ENCODE measurements at regions of chr21 and their contacts with region 1.

Region 1: GRCh38 chr21:42424914-42425541 is 21.3 kb downstream of the UBASH3A start:
- DNase-seq: peak; percentile 75
- H3K4me3 Mint-ChIP-seq: peak overlapping the region; percentile 44
- H3K27ac Mint-ChIP-seq: peak overlapping the region; percentile 61
- H3K4me1 Mint-ChIP-seq: peaks cover 67% of the 10 kb centered on the region
- H3K27me3 Mint-ChIP-seq: no peaks in the 10 kb centered on the region

Region 2: GRCh38 chr21:42227909-42228708 is 196.9 kb before region 1 on chr21:
- CTCF ChIA-PET with region 1: no interaction called
- intact Hi-C with region 1: loop called (anchors 2 kb)
- DNase-seq: peak; percentile 98
- H3K4me3 Mint-ChIP-seq: peak overlapping the region; percentile 54
- H3K27ac Mint-ChIP-seq: peak overlapping the region; percentile 89
- H3K4me1 Mint-ChIP-seq: peaks cover 78% of the 10 kb centered on the region
- H3K27me3 Mint-ChIP-seq: no peaks in the 10 kb centered on the region

Region 3: DNA sequence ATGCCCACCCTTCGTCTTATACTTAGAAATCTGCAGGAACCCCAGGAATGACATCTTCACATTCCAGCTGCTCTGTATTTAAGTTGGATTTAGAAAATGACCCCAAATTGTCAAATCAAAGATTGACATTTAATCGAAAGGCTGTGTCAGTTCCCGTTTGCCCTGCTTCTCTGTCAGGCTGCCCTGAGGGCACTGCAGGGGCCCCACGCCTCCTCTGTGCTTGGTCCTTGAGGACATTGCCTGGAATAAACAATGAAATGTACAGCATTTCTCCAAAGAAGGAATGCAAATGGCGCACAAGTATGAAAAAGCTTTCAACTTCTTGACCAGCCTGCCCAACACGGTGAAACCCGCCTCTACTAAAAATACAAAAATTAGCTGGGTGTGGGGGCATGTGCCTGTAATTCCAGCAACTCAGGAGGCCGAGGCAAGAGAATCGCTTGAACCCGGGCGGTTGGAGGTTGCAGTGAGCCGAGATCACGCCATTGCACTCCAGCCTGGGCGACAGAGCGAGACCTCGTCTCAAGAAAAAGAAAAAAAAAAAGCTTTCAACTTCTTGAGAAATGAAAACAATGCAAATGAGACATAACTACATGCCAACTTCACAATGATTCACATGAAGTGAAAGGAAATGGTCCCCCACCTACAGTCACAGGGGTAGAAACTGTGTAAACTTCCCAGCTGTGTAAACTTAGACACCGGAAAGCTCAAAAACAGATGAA is 32.1 kb before region 1 on chr21:
- CTCF ChIA-PET with region 1: interaction called, 7 read pairs
- intact Hi-C with region 1: loop called (anchors 1 kb)
- DNase-seq: peak; percentile 62
- H3K4me3 Mint-ChIP-seq: peak overlapping the region; percentile 13
- H3K27ac Mint-ChIP-seq: peak overlapping the region; percentile 58
- H3K4me1 Mint-ChIP-seq: peaks cover 44% of the 10 kb centered on the region
- H3K27me3 Mint-ChIP-seq: no peaks in the 10 kb centered on the region

Region 4: DNA sequence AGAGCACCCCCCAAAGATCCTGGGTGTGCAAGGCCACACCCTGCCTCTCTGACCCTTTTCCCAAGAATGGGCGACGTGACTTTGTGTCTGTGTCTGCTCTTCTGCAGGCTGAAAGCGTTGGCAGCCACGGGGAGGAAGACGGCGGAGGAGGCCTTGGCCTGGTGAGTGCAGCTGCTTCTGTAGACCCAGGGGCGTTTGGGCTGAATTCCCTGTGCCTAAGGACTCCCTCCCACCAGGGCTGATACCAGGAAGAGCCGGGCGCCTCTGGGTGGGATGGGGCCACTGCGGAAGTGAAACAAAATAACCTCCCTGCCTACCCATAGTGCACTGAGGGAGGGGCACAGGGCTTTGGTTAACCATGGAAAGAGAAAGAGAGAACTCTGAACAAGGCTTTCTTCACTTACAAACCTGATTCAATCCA is 18.8 kb before region 1 on chr21:
- CTCF ChIA-PET with region 1: interaction called, 12 read pairs
- intact Hi-C with region 1: loop called (anchors 2 kb)
- DNase-seq: peak; percentile 84
- H3K4me3 Mint-ChIP-seq: peak overlapping the region; percentile 97
- H3K27ac Mint-ChIP-seq: peak overlapping the region; percentile 98
- H3K4me1 Mint-ChIP-seq: peaks cover 56% of the 10 kb centered on the region
- H3K27me3 Mint-ChIP-seq: no peaks in the 10 kb centered on the region

Region 5: GRCh38 chr21:42449296-42449927 is 24.4 kb after region 1 on chr21:
- CTCF ChIA-PET with region 1: interaction called, 5 read pairs
- intact Hi-C with region 1: loop called (anchors 2 kb)
- DNase-seq: no peak
- H3K4me3 Mint-ChIP-seq: no peak overlapping the region
- H3K27ac Mint-ChIP-seq: peak overlapping the region; percentile 86
- H3K4me1 Mint-ChIP-seq: peaks cover 34% of the 10 kb centered on the region
- H3K27me3 Mint-ChIP-seq: no peaks in the 10 kb centered on the region

Measured in activated naive CD4-positive, alpha-beta T cell treated with anti-CD3 and anti-CD28 coated beads for 36 hours (primary cell).